Colonic mucosa (tissue), 4 donors: ENCODE measurements at regions of chr9 and their contacts with region 1.

Region 1: GRCh38 chr9:14645648-14646047 is 47.6 kb downstream of the ZDHHC21 start:
- DNase-seq: no peak
- H3K4me3 ChIP-seq: no peak overlapping the region
- H3K27ac ChIP-seq: no peak overlapping the region
- H3K4me1 ChIP-seq: no peaks in the 10 kb centered on the region
- H3K27me3 ChIP-seq: no peaks in the 10 kb centered on the region
- CTCF ChIP-seq: no peak

Region 2: GRCh38 chr9:14478175-14479162 is 167.2 kb before region 1 on chr9:
- intact Hi-C with region 1: loop called (anchors 10 kb)
- DNase-seq: no peak
- H3K4me3 ChIP-seq: no peak overlapping the region
- H3K27ac ChIP-seq: no peak overlapping the region
- H3K4me1 ChIP-seq: no peaks in the 10 kb centered on the region
- H3K27me3 ChIP-seq: no peaks in the 10 kb centered on the region
- CTCF ChIP-seq: no peak

Region 3: DNA sequence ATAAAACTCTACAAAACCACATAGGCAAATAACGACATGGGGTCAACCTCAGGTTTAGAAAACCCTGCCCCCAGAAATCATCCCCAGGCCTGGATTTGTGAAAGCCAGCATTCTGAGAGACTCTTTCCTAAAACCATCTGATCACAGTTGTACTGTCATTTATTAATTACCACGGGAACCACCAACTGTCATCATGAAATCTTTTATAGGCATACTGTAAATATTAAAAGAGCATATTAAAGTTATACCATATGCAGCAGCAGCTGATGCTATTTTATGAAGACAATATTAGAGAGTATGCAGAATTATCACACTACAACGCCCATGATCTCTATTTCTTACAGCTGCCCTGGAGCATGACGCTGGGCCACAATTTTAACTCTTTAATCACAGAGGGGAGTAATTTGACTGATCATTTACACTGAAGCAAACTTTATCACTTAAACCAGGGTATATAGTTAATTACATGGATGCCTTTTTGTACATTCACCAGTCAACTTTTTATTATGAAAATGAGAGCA is 56.6 kb after region 1 on chr9:
- intact Hi-C with region 1: no loop called
- DNase-seq: no peak
- H3K4me3 ChIP-seq: no peak overlapping the region
- H3K27ac ChIP-seq: no peak overlapping the region
- H3K4me1 ChIP-seq: no peaks in the 10 kb centered on the region
- H3K27me3 ChIP-seq: no peaks in the 10 kb centered on the region
- CTCF ChIP-seq: no peak